Heart right ventricle (tissue), 16 donors: ENCODE measurements at regions of chr5 and their contacts with region 1.

Region 1: DNA sequence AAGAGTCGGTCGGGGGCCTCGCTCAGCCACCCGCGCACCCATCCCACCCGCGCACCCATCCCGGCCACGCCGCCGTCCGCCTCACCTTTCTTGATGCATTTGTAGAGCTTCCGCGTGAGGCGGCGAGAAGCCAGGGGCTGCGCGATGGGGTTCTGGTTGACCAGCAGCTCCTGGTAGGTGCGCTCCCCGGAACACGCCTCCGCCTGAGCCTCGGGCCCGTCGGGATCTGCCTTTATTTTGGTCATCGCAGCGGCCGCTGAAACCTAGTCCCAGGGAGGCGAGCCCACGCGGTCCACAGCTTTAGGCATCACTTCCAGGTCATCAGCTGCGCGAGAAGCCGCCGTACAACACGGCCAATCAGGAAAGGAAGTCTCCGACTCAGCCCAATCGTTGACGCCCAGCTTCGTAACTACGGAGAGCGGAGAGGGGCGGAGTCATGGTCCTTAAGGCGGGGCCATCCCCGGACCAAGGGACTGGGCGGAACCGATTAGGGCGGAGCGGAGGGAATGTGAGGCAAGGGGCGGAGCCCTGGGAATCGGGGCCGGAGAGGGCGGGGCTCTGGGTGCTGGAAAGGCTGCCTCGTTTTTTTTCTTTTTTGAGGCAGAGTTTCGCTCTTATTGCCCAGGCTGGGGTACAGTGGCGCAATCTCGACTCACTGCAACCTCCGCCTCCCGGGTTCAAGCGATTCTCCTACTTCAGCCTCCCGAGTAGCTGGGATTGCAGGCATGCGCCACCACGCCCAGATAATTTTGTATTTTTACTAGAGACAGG is at the start of gene NHP2:
- DNase-seq: peak; percentile 98 to 99
- ATAC-seq: peak; percentile 98 to 100 (median 99)
- H3K4me3 ChIP-seq: peak within 1 kb of the TSS; percentile 64 to 91 (median 82)
- H3K27ac ChIP-seq: peak within 1 kb of the TSS in 9 of 10 donors; percentile 40 to 79 (median 71)
- H3K4me1 ChIP-seq: peaks cover 0 to 29% (median 20%) of the 10 kb centered on the region in 9 donors
- H3K27me3 ChIP-seq: no peaks in the 10 kb centered on the region
- CTCF ChIP-seq: no peak
- total RNA-seq, gene NHP2: 66.7 to 95.8 (median 74.5) TPM

Region 2: DNA sequence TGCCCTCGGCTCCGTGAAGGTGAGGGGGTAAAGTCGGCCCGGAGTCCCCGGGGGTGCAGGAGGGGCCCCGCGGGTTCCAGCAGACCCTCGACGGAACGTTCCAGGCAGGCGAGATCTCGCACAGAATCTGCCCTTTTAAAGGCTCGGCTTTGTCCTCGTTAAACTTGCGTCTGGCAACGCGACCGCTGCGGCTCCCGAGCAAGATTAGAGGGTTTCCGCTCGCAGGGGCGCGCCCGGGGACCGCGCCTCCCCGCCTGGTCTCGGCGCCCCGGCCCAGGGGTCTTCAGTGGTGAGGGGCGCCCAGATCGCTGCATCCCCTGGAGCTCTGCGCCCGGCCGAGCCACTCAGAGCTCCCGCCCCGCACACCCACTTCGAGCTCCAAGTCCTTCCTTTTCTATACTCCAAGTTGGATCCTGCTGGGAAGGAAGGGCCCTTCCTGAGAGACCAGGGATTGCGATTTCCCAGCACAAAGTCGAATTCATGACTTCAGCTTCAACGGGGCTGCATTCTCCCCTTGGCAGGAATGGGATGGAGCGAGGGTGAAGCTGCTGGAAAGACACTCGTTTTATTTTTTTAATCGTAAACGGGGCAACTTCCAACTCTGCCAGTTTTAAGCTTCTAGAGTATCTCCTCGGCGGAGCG is 169.1 kb before region 1 on chr5:
- intact Hi-C with region 1: no loop called
- DNase-seq: no peak
- ATAC-seq: no peak
- H3K4me3 ChIP-seq: no peak overlapping the region
- H3K27ac ChIP-seq: no peak overlapping the region
- H3K4me1 ChIP-seq: peaks cover 0 to 3% (median 0%) of the 10 kb centered on the region in 9 donors
- H3K27me3 ChIP-seq: peaks cover 14 to 89% (median 85%) of the 10 kb centered on the region in 7 donors
- CTCF ChIP-seq: no peak

Region 3: DNA sequence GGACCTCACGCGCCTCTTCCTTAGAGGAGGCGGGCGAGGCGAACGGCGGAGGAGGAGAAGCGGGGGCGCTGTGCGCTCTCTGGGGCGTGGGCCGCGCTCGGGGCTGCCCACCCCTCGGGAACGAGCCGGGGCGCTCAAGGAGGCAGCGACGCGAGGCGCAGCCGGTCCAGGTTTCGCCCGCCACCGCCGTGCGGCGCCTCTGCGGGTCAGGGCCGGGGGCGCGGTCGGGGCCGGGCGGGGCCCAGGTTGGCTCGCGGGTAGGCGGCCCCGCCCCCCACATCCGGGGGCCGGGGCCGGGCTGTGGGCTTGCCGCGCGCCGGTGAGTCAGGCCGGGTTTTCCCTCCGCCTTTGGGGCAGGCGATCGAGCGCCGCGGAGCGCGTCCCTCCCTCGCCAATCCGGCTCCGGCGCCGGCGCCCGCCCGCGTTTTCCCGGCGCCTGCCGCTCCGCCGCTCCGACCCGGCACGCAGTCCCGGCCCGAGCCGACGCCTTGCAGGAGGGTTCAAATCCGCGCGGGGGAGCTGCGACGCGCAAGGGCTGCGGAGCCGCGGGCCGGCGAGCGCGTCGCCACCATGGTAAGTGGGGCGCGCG is 40.5 kb before region 1 on chr5 and contains the start of gene N4BP3:
- intact Hi-C with region 1: loop called in 3 of 10 experiments (anchors 5 kb)
- DNase-seq: peak; percentile 57 to 60
- ATAC-seq: peak; percentile 60 to 85 (median 67)
- H3K4me3 ChIP-seq: peak within 1 kb of the TSS; percentile 52 to 70 (median 62)
- H3K27ac ChIP-seq: peak within 1 kb of the TSS; percentile 43 to 86 (median 80)
- H3K4me1 ChIP-seq: peaks cover 9 to 55% (median 40%) of the 10 kb centered on the region in 9 donors
- H3K27me3 ChIP-seq: peaks cover 0 to 60% (median 40%) of the 10 kb centered on the region in 7 donors
- CTCF ChIP-seq: peak in 1 of 9 donors; percentile 3
- total RNA-seq, gene N4BP3: 1.1 to 5.5 (median 2.5) TPM

Region 4: GRCh38 chr5:178130604-178131485 is 22.9 kb before region 1 on chr5 and contains the start of gene RMND5B:
- intact Hi-C with region 1: loop called in 1 of 10 experiments (anchors 2 kb)
- DNase-seq: peak; percentile 79 to 89
- ATAC-seq: peak; percentile 92 to 97 (median 95)
- H3K4me3 ChIP-seq: peak within 1 kb of the TSS; percentile 68 to 99 (median 86)
- H3K27ac ChIP-seq: peak within 1 kb of the TSS; percentile 84 to 97 (median 93)
- H3K4me1 ChIP-seq: peaks cover 2 to 36% (median 27%) of the 10 kb centered on the region in 9 donors
- H3K27me3 ChIP-seq: no peaks in the 10 kb centered on the region
- CTCF ChIP-seq: no peak
- total RNA-seq, gene RMND5B: 29.1 to 38.5 (median 32.8) TPM

Region 5: DNA sequence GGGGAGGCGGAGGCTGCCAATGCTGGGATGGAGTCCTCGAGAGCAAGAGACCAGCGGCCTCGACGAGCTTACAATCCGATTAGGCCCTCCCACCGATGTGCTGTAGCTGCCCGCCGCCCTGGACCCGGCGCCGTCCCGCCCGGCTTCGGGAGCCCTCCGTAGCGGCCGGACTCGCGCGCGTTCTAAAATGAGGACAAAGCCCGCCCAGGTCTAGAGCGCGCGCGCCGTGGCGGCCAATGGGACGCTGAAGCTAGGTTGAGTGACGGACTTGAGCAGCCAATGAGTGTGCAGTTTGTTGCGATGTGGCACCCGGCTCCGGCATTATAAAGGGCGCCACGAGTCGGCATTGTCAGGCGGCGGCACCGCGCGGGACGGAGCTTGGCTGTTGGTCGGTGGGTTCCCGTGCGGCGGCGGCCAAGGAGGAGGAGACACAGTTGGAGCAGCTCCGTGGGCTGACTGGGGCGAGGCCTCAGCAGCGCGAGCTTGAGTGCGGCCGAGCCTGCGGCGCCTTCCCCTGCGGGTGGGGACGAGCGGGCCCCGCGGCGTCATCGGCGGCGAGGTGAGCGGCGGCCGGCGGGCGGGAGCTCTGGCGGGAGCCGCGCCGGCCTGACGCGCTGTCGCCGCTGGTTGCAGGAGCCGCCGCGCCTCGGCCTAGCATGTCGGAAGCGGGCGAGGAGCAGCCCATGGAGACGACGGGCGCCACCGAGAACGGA is 50.6 kb after region 1 on chr5 and contains the start of gene HNRNPAB:
- intact Hi-C with region 1: no loop called
- DNase-seq: peak; percentile 92 to 95
- ATAC-seq: peak; percentile 92 to 97 (median 96)
- H3K4me3 ChIP-seq: peak within 1 kb of the TSS; percentile 70 to 100 (median 85)
- H3K27ac ChIP-seq: peak within 1 kb of the TSS; percentile 88 to 98 (median 95)
- H3K4me1 ChIP-seq: peaks cover 13 to 40% (median 30%) of the 10 kb centered on the region in 9 donors
- H3K27me3 ChIP-seq: no peaks in the 10 kb centered on the region
- CTCF ChIP-seq: no peak
- total RNA-seq, gene HNRNPAB: 70.8 to 132 (median 81.4) TPM